ENCODE measurements at regions of chr15 and their contacts with region 1.

Region 1: GRCh38 chr15:75029378-75030022 is 6.1 kb downstream of the PPCDC start:
- DNase-seq: peak; percentile 66
- H3K4me3 ChIP-seq: no peak overlapping the region
- H3K27ac ChIP-seq: no peak overlapping the region
- H3K4me1 ChIP-seq: peaks cover 18% of the 10 kb centered on the region
- H3K27me3 ChIP-seq: no peaks in the 10 kb centered on the region
- CTCF ChIP-seq: peak; percentile 89 to 92

Region 2: DNA sequence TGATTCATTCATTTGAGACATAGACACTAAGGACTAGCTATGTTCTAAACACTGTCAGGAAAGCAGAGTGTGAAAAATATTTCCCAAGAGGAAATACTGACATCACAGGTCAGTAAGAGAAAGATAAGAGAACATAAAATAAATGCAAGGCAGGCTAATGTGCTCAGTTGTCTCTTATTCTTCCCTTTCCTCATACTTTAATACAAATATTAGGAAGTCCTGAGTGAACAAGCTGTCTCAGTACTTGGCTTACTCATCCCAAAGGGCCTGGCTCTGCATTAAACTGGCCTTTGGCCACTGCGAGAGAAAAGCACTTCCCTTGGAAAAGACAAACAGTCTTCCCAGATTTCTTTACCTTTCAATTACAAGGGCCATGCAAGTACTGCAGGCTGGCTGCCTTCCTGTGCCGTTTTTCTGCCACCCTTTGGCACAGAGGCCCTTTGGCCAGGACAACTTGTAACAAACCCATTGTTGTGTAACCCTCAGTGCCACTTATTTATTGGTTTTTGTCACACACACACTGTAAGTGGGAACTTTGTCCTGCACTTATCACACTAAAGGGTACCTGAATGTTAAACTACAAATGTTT is 365.4 kb before region 1 on chr15:
- CTCF ChIA-PET with region 1: no interaction called
- dilution Hi-C with region 1: no loop called
- in situ Hi-C with region 1: no loop called
- intact Hi-C with region 1: no loop called
- DNase-seq: peak; percentile 23
- H3K4me3 ChIP-seq: no peak overlapping the region
- H3K27ac ChIP-seq: no peak overlapping the region
- H3K4me1 ChIP-seq: no peaks in the 10 kb centered on the region
- H3K27me3 ChIP-seq: no peaks in the 10 kb centered on the region
- CTCF ChIP-seq: no peak

Region 3: GRCh38 chr15:74723754-74724334 is 305.7 kb before region 1 on chr15:
- CTCF ChIA-PET with region 1: no interaction called
- dilution Hi-C with region 1: no loop called
- in situ Hi-C with region 1: no loop called
- intact Hi-C with region 1: no loop called
- DNase-seq: peak; percentile 74
- H3K4me3 ChIP-seq: no peak overlapping the region
- H3K27ac ChIP-seq: no peak overlapping the region
- H3K4me1 ChIP-seq: peaks cover 12% of the 10 kb centered on the region
- H3K27me3 ChIP-seq: no peaks in the 10 kb centered on the region
- CTCF ChIP-seq: no peak

Region 4: GRCh38 chr15:74978503-74978902 is 51.0 kb before region 1 on chr15:
- CTCF ChIA-PET with region 1: no interaction called
- dilution Hi-C with region 1: no loop called
- in situ Hi-C with region 1: no loop called
- intact Hi-C with region 1: no loop called
- DNase-seq: no peak
- H3K4me3 ChIP-seq: no peak overlapping the region
- H3K27ac ChIP-seq: no peak overlapping the region
- H3K4me1 ChIP-seq: no peaks in the 10 kb centered on the region
- H3K27me3 ChIP-seq: no peaks in the 10 kb centered on the region
- CTCF ChIP-seq: no peak

Region 5: GRCh38 chr15:75307778-75308391 is 278.4 kb after region 1 on chr15:
- CTCF ChIA-PET with region 1: no interaction called
- dilution Hi-C with region 1: no loop called
- in situ Hi-C with region 1: no loop called
- intact Hi-C with region 1: loop called (anchors 1 kb)
- DNase-seq: peak; percentile 57
- H3K4me3 ChIP-seq: no peak overlapping the region
- H3K27ac ChIP-seq: no peak overlapping the region
- H3K4me1 ChIP-seq: peaks cover 5% of the 10 kb centered on the region
- H3K27me3 ChIP-seq: no peaks in the 10 kb centered on the region
- CTCF ChIP-seq: peak; percentile 75 to 83

Region 6: DNA sequence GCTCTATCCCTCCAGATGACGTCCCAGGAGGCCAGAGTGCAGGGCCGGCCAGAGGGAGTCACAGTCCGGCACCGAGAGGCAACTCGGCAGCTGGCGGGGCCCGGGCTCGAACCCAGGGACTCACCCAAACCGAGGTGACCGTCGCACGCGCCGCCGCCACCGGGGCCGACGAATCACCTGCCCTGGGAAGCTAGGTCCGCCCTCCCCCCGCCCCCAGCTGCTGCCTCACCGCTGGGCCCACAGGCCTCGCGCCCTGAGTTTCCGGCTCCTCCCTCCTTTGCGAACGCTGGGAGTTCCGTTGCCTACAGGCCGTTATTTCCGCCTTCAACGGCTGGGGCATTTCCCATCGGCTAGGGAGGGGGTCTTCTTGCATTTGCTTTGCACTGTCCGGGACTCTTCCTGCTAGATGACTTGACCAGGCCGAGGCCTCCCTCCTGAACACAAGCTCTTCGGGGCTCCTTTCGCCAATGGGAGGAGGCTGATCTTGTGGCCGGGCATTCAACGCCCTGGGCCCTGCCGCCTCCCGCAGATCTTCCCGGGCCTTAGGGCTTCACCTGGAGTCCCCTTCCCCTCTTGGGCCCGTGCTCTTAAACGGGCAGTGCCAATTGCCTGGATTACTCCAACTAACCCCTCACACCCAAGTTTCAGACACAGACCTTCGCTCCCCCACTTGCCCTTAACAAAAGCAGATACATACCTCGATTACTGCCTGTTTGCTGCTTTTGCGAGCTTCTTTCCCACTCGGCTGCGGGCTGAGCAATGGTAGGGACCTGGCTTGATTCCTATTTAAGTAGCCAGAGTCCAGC is 596.2 kb after region 1 on chr15 and contains the start of gene SNUPN:
- CTCF ChIA-PET with region 1: no interaction called
- dilution Hi-C with region 1: no loop called
- in situ Hi-C with region 1: no loop called
- intact Hi-C with region 1: loop called (anchors 5 kb)
- DNase-seq: peak; percentile 87
- H3K4me3 ChIP-seq: peak within 1 kb of the TSS; percentile 65 to 100 (median 96)
- H3K27ac ChIP-seq: peak within 1 kb of the TSS; percentile 82
- H3K4me1 ChIP-seq: peaks cover 26% of the 10 kb centered on the region
- H3K27me3 ChIP-seq: no peaks in the 10 kb centered on the region
- CTCF ChIP-seq: no peak
- total RNA-seq, gene SNUPN: 16.5 to 21.5 TPM